Activated CD8-positive, alpha-beta T cell treated with anti-CD3 and anti-CD28 coated beads for 36 hours (primary cell): ENCODE measurements at regions of chr1 and their contacts with region 1.

Region 1: GRCh38 chr1:206865013-206865671 is at the start of gene IL20:
- DNase-seq: peak; percentile 92
- ATAC-seq: peak; percentile 97
- H3K4me3 Mint-ChIP-seq: no peak within 1 kb of the TSS
- H3K27ac Mint-ChIP-seq: no peak within 1 kb of the TSS
- H3K4me1 Mint-ChIP-seq: peaks cover 12% of the 10 kb centered on the region
- H3K27me3 Mint-ChIP-seq: peaks cover 2% of the 10 kb centered on the region
- CTCF ChIP-seq: peak; percentile 98
- total RNA-seq, gene IL20: not detected

Region 2: GRCh38 chr1:206782448-206782847 is 82.7 kb before region 1 on chr1:
- CTCF ChIA-PET with region 1: no interaction called
- POLR2A ChIA-PET with region 1: no interaction called
- intact Hi-C with region 1: no loop called
- DNase-seq: peak; percentile 65
- ATAC-seq: peak; percentile 52
- H3K4me3 Mint-ChIP-seq: no peak overlapping the region
- H3K27ac Mint-ChIP-seq: no peak overlapping the region
- H3K4me1 Mint-ChIP-seq: peaks cover 57% of the 10 kb centered on the region
- H3K27me3 Mint-ChIP-seq: no peaks in the 10 kb centered on the region
- CTCF ChIP-seq: no peak

Region 3: DNA sequence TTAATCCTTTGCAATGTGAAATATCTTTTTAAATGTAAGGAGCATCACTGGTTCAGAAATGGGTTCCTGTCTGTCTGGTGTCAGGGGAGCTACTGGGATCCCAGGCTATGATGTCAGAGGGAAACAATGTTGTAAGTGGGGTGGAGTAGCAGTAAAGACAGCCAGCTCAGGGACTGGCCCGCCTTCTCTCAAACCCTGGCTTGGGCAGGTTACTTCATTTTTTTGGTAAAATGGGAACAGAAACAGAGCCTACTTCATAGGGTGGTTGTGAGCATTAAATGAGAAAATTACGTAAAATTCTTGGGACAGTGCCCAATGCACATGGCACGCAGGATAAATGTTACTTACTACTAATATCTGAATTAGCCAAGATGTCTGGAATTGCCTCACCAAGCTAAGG is 30.4 kb before region 1 on chr1:
- CTCF ChIA-PET with region 1: interaction called, 25 read pairs
- POLR2A ChIA-PET with region 1: no interaction called
- intact Hi-C with region 1: no loop called
- DNase-seq: no peak
- ATAC-seq: no peak
- H3K4me3 Mint-ChIP-seq: no peak overlapping the region
- H3K27ac Mint-ChIP-seq: no peak overlapping the region
- H3K4me1 Mint-ChIP-seq: peaks cover 25% of the 10 kb centered on the region
- H3K27me3 Mint-ChIP-seq: peaks cover 4% of the 10 kb centered on the region
- CTCF ChIP-seq: no peak

Region 4: GRCh38 chr1:206878456-206878855 is 13.3 kb after region 1 on chr1:
- CTCF ChIA-PET with region 1: interaction called, 40 read pairs
- POLR2A ChIA-PET with region 1: no interaction called
- intact Hi-C with region 1: no loop called
- DNase-seq: no peak
- ATAC-seq: peak; percentile 49
- H3K4me3 Mint-ChIP-seq: no peak overlapping the region
- H3K27ac Mint-ChIP-seq: no peak overlapping the region
- H3K4me1 Mint-ChIP-seq: peaks cover 3% of the 10 kb centered on the region
- H3K27me3 Mint-ChIP-seq: no peaks in the 10 kb centered on the region
- CTCF ChIP-seq: no peak

Region 5: GRCh38 chr1:206895830-206896242 is 30.7 kb after region 1 on chr1:
- CTCF ChIA-PET with region 1: interaction called, 22 read pairs
- POLR2A ChIA-PET with region 1: interaction called, 3 read pairs
- intact Hi-C with region 1: no loop called
- DNase-seq: no peak
- ATAC-seq: no peak
- H3K4me3 Mint-ChIP-seq: no peak overlapping the region
- H3K27ac Mint-ChIP-seq: no peak overlapping the region
- H3K4me1 Mint-ChIP-seq: peaks cover 66% of the 10 kb centered on the region
- H3K27me3 Mint-ChIP-seq: no peaks in the 10 kb centered on the region
- CTCF ChIP-seq: no peak

Region 6: GRCh38 chr1:206905280-206906164 is 40.4 kb after region 1 on chr1:
- CTCF ChIA-PET with region 1: interaction called, 26 read pairs
- POLR2A ChIA-PET with region 1: interaction called, 4 read pairs
- intact Hi-C with region 1: no loop called
- DNase-seq: peak; percentile 70
- ATAC-seq: peak; percentile 90
- H3K4me3 Mint-ChIP-seq: peak overlapping the region; percentile 34
- H3K27ac Mint-ChIP-seq: peak overlapping the region; percentile 96
- H3K4me1 Mint-ChIP-seq: peaks cover 79% of the 10 kb centered on the region
- H3K27me3 Mint-ChIP-seq: no peaks in the 10 kb centered on the region
- CTCF ChIP-seq: no peak

Region 7: GRCh38 chr1:206918076-206918475 is 52.9 kb after region 1 on chr1:
- CTCF ChIA-PET with region 1: interaction called, 100 read pairs
- POLR2A ChIA-PET with region 1: no interaction called
- intact Hi-C with region 1: no loop called
- DNase-seq: no peak
- ATAC-seq: no peak
- H3K4me3 Mint-ChIP-seq: peak overlapping the region; percentile 75
- H3K27ac Mint-ChIP-seq: peak overlapping the region; percentile 89
- H3K4me1 Mint-ChIP-seq: peaks cover 64% of the 10 kb centered on the region
- H3K27me3 Mint-ChIP-seq: no peaks in the 10 kb centered on the region
- CTCF ChIP-seq: no peak